Activated CD4-positive, alpha-beta memory T cell treated with anti-CD3 and anti-CD28 coated beads, Interleukin-2, amount 10 ng/mL, durations not matched to agents 7 days and 5 days (primary cell): ENCODE measurements at regions of chr3 and their contacts with region 1.

Region 1: DNA sequence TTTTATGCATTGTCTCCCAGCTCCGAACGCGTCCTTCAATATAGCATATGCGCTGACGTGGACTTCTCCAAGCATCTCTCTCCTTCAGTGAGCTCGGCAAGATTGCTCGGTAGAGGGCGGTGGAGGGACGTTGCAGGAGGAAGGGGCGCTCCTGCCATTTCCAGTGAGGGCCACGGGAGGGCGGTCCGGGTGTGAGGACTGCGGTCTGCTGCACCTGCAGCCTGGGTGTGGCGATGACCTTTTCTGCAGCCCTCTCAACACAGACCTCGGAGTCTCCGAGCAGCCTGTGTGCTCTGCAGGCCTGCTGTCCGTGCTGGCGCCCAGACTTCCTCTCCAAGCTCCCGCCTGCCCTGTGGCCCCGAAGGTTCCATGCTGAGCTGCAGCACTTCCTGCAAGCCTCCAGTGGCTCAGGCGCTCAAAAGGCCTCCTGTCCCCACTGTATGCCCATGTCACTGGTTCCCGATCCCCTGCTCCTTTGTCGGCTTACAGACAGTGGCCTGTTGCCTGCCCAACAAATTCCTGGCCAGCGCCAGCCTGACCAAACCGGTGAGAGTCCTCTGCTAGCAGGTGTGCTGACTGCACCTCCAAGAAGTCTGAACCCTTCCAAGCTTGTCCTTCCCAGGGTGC is 8.9 kb upstream of the RTP3 start:
- DNase-seq: peak; percentile 94
- H3K4me3 Mint-ChIP-seq: peak overlapping the region; percentile 5
- H3K27ac Mint-ChIP-seq: no peak overlapping the region
- H3K4me1 Mint-ChIP-seq: peaks cover 17% of the 10 kb centered on the region
- H3K27me3 Mint-ChIP-seq: peaks cover 10% of the 10 kb centered on the region

Region 2: GRCh38 chr3:46469680-46470357 is 19.0 kb before region 1 on chr3:
- CTCF ChIA-PET with region 1: interaction called, 22 read pairs
- POLR2A ChIA-PET with region 1: no interaction called
- DNase-seq: peak; percentile 10
- H3K4me3 Mint-ChIP-seq: no peak overlapping the region
- H3K27ac Mint-ChIP-seq: no peak overlapping the region
- H3K4me1 Mint-ChIP-seq: no peaks in the 10 kb centered on the region
- H3K27me3 Mint-ChIP-seq: peaks cover 39% of the 10 kb centered on the region

Region 3: DNA sequence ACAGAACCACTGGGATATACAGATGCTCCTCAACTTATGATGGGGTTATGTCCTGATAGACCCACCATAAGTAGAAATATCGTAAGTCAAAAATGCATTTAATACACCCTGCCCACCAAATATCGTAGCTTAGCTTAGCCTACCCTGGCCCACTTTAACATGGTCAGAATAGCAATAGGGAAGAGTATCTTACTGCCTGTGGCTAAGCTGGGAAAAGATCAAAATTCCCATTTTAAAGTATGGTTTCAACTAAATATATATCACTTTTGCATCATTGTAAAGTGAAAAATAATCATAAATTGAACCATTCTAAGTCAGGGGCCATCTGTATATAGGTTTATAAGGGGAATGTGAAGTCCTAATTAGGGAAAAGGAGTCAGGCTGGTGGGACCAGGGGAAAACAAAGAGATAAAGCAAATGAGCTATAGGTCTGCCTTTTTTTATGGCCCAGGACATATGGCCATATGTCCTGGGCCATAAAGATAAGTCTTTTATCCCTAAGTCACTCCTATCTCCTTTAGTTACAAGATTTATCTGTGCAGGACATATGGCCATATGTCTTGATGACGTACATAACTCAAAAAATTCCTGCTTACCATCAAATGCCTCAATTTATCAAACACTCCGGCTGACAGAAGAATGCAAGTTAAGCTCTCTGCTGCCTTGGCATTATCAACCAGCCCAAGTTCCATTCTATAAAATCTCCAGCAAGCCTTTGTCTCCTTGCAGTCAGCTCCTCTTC is 20.2 kb after region 1 on chr3:
- CTCF ChIA-PET with region 1: interaction called, 10 read pairs
- POLR2A ChIA-PET with region 1: no interaction called
- DNase-seq: no peak
- H3K4me3 Mint-ChIP-seq: no peak overlapping the region
- H3K27ac Mint-ChIP-seq: no peak overlapping the region
- H3K4me1 Mint-ChIP-seq: peaks cover 11% of the 10 kb centered on the region
- H3K27me3 Mint-ChIP-seq: peaks cover 9% of the 10 kb centered on the region

Region 4: DNA sequence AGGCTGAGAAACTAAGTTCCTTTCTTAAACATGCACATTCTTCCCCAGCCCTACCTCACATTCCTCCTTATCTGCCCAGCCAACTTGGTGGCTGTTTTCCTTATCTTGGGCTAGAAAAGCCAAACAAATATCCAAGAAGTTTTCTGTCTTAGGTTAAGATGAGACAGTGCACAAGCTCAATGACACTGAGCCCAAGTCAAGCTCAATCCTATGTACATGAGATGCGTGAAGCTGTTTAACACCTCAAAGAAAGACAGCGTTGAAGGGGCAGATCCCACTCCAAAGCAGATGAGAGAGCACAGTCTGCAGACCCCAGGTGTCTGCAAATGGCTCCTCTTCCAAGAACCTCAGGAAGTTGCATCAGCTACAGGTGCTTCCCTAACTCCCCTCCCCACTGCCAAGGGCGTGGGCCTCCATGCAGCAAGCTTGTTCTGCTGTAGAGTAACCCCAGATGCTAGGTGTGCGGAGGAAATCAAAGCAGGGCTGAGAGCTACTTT is 60.6 kb after region 1 on chr3:
- CTCF ChIA-PET with region 1: interaction called, 15 read pairs
- POLR2A ChIA-PET with region 1: interaction called, 7 read pairs
- DNase-seq: no peak
- H3K4me3 Mint-ChIP-seq: no peak overlapping the region
- H3K27ac Mint-ChIP-seq: no peak overlapping the region
- H3K4me1 Mint-ChIP-seq: peaks cover 24% of the 10 kb centered on the region
- H3K27me3 Mint-ChIP-seq: peaks cover 20% of the 10 kb centered on the region

Region 5: GRCh38 chr3:46565607-46566035 is 76.8 kb after region 1 on chr3:
- CTCF ChIA-PET with region 1: interaction called, 171 read pairs
- POLR2A ChIA-PET with region 1: interaction called, 12 read pairs
- DNase-seq: no peak
- H3K4me3 Mint-ChIP-seq: peak overlapping the region; percentile 65
- H3K27ac Mint-ChIP-seq: no peak overlapping the region
- H3K4me1 Mint-ChIP-seq: peaks cover 15% of the 10 kb centered on the region
- H3K27me3 Mint-ChIP-seq: peaks cover 54% of the 10 kb centered on the region

Region 6: GRCh38 chr3:46629551-46630517 is 141.0 kb after region 1 on chr3:
- CTCF ChIA-PET with region 1: interaction called, 222 read pairs
- POLR2A ChIA-PET with region 1: interaction called, 19 read pairs
- DNase-seq: peak; percentile 82
- H3K4me3 Mint-ChIP-seq: peak overlapping the region; percentile 16
- H3K27ac Mint-ChIP-seq: no peak overlapping the region
- H3K4me1 Mint-ChIP-seq: peaks cover 19% of the 10 kb centered on the region
- H3K27me3 Mint-ChIP-seq: peaks cover under 1% of the 10 kb centered on the region